HCT116 (cell line): ENCODE measurements at regions of chr16 and their contacts with region 1.

Region 1: DNA sequence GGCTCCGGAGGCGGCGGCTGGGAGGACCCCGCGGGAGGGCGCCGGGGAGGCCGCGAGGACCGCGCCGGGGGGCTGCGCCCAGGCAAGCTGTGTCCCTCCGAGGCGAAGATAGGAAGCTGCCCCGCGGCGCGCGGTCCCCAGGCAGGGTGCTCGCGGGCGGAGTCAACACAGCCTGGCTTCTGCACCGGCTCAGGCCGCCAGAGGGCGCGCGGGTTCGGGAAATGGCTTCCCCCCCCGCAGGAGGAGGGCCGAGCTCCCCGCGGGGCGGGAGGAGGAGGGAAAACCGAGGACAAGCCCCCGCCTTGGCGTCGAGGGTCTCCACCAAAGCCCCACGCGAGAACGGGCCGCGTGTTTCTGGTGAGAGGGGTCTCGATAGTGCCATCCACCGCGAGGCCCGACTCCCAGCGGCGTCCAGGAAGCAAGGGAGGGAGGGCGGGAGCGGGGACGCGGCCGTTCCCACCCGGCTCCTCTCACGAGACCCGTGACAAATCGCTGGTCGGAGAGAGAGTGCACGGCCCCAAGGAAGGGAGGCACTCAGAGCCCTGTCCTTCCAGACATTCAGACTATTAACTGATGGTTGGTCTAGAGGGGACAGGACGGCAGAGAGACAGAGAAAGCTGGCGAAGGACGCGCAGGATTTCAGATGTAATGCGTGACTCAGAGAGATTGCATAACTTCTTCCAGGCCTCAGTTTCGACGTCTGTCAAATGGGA is 64.4 kb upstream of the DNAJA2 start:
- DNase-seq: peak; percentile 49
- ATAC-seq: peak; percentile 95
- H3K4me3 ChIP-seq: peak overlapping the region; percentile 46 to 67
- H3K27ac ChIP-seq: peak overlapping the region; percentile 43; the same call in 1 of the 2 replicates
- H3K4me1 ChIP-seq: peaks cover 5 to 10% of the 10 kb centered on the region in 2 experiments; a peak in 2 of 4 replicates
- H3K27me3 ChIP-seq: no peaks in the 10 kb centered on the region
- CTCF ChIP-seq: peak; percentile 55 to 86 (median 78); a peak in 5 of 6 replicates
- POLR2A ChIP-seq: no peak
- RAD21 ChIP-seq: peak; percentile 81

Region 2: GRCh38 chr16:46853713-46854443 is 184.0 kb before region 1 on chr16:
- CTCF ChIA-PET with region 1: interaction called, 3 read pairs
- POLR2A ChIA-PET with region 1: no interaction called
- RAD21 ChIA-PET with region 1: interaction called in 1 of 2 experiments, 9 read pairs
- intact Hi-C with region 1: loop called (anchors 1 kb)
- DNase-seq: peak; percentile 50
- ATAC-seq: peak; percentile 84
- H3K4me3 ChIP-seq: no peak overlapping the region
- H3K27ac ChIP-seq: no peak overlapping the region
- H3K4me1 ChIP-seq: peaks cover 1 to 11% of the 10 kb centered on the region in 2 experiments; a peak in 3 of 4 replicates
- H3K27me3 ChIP-seq: no peaks in the 10 kb centered on the region
- CTCF ChIP-seq: peak; percentile 80 to 81 (median 81)
- POLR2A ChIP-seq: no peak
- RAD21 ChIP-seq: peak; percentile 94

Region 3: DNA sequence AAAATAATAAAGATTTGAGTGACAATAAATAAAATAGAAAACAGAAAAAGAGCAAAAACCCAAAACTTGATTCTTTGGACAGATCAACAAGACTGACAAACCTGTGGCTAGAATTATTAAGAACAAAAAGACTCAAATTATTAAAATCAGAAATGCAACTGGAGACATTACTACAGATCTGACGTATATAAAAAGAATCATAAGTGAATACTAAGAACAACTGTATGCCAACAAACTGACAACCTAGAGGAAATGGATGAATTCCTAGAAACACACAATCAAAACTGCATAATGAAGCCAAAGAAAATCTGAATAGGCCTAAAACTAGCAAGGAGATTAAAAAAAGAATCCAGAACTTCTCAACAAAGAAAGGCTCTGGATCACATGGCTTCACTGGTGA is 58.4 kb after region 1 on chr16:
- CTCF ChIA-PET with region 1: no interaction called
- POLR2A ChIA-PET with region 1: no interaction called
- RAD21 ChIA-PET with region 1: no interaction called
- intact Hi-C with region 1: no loop called
- DNase-seq: no peak
- ATAC-seq: no peak
- H3K4me3 ChIP-seq: no peak overlapping the region
- H3K27ac ChIP-seq: no peak overlapping the region
- H3K4me1 ChIP-seq: no peaks in the 10 kb centered on the region
- H3K27me3 ChIP-seq: no peaks in the 10 kb centered on the region
- CTCF ChIP-seq: no peak
- POLR2A ChIP-seq: no peak
- RAD21 ChIP-seq: no peak

Region 4: GRCh38 chr16:47136101-47136820 is 98.4 kb after region 1 on chr16:
- CTCF ChIA-PET with region 1: interaction called, 18 read pairs
- POLR2A ChIA-PET with region 1: interaction called, 4 read pairs
- RAD21 ChIA-PET with region 1: interaction called, 3 read pairs
- intact Hi-C with region 1: loop called (anchors 5 kb)
- DNase-seq: peak; percentile 21
- ATAC-seq: peak; percentile 37
- H3K4me3 ChIP-seq: no peak overlapping the region
- H3K27ac ChIP-seq: no peak overlapping the region
- H3K4me1 ChIP-seq: peaks cover 17 to 42% of the 10 kb centered on the region in 2 experiments; a peak in 3 of 4 replicates
- H3K27me3 ChIP-seq: no peaks in the 10 kb centered on the region
- CTCF ChIP-seq: no peak
- POLR2A ChIP-seq: no peak
- RAD21 ChIP-seq: no peak

Region 5: DNA sequence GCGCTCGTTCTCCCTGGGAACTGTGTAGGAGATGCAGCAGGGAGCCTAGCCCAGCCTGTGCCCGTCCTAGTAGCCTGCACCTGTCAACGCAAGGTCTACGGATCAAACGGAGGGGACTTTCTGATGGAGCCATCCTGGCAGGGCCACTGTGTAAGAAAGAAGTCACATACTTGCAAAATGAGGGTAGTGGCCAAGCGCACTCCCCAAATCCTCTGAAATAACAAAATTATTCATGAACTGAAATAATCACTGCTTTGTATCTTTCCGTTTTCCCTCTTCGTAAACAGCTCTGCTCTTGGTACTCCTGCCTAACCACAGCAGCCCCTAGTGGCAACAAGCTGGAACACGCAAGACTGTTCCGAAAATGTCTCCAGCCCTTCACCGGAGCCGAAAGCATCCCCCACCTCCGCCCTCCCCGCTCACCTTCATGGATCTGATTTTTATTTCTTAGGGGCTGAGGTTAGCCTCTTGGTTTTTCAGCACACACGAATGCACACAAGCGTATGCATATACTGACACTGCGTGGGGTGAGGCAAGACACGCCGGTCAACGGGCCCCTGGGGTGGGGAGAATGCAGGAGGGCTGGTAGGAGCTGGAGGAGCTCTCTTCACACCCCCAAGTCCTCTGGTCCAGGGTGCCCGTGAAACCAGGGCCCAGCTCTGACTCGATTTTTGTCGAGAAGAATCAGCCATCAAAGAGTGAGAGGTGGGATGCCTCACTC is 1017.1 kb after region 1 on chr16:
- CTCF ChIA-PET with region 1: interaction called, 11 read pairs
- POLR2A ChIA-PET with region 1: no interaction called
- RAD21 ChIA-PET with region 1: no interaction called
- intact Hi-C with region 1: loop called (anchors 5 kb)
- DNase-seq: peak; percentile 35
- ATAC-seq: peak; percentile 97
- H3K4me3 ChIP-seq: no peak overlapping the region
- H3K27ac ChIP-seq: no peak overlapping the region
- H3K4me1 ChIP-seq: peaks cover 0 to 5% of the 10 kb centered on the region in 2 experiments; a peak in 1 of 4 replicates
- H3K27me3 ChIP-seq: peaks cover 36% of the 10 kb centered on the region
- CTCF ChIP-seq: peak; percentile 37 to 93 (median 84); a peak in 5 of 6 replicates
- POLR2A ChIP-seq: no peak
- RAD21 ChIP-seq: peak; percentile 71

Region 6: DNA sequence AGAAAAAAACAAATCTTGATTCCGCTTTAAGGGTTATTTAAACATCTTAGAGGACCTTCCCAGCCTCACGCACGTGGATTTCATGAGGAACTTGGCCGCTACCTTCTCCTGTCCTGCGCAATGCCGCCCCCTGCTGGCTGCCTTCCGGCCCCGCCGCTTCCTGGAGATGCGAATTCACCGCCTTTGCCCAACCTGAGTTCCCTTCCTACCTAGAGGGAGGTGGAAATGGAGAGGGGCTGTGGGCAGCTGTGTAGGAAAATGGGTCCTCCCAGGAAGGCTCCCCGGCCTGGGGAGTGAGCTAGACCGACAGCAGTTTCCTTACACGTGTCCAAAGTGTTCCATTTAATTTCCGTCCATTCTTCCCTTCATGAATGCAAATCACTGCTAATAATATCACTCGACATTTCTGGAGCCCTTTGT is 1118.9 kb after region 1 on chr16:
- CTCF ChIA-PET with region 1: interaction called, 6 read pairs
- POLR2A ChIA-PET with region 1: no interaction called
- RAD21 ChIA-PET with region 1: no interaction called
- intact Hi-C with region 1: loop called (anchors 2 kb)
- DNase-seq: peak; percentile 62
- ATAC-seq: peak; percentile 81
- H3K4me3 ChIP-seq: no peak overlapping the region
- H3K27ac ChIP-seq: no peak overlapping the region
- H3K4me1 ChIP-seq: peaks cover 14 to 34% of the 10 kb centered on the region in 2 experiments
- H3K27me3 ChIP-seq: no peaks in the 10 kb centered on the region
- CTCF ChIP-seq: peak; percentile 74 to 96 (median 84)
- POLR2A ChIP-seq: no peak
- RAD21 ChIP-seq: peak; percentile 93